ENCODE measurements at regions of chr11 and their contacts with region 1.

Region 1: GRCh38 chr11:7098235-7098832 is 9.5 kb downstream of the RBMXL2 start:
- DNase-seq: peak; percentile 49
- H3K4me3 ChIP-seq: no peak overlapping the region
- H3K27ac ChIP-seq: no peak overlapping the region
- H3K4me1 ChIP-seq: no peaks in the 10 kb centered on the region
- H3K27me3 ChIP-seq: peaks cover 12% of the 10 kb centered on the region
- CTCF ChIP-seq: peak; percentile 62

Region 2: GRCh38 chr11:7278314-7278917 is 180.1 kb after region 1 on chr11:
- CTCF ChIA-PET with region 1: no interaction called
- POLR2A ChIA-PET with region 1: no interaction called
- intact Hi-C with region 1: loop called (anchors 5 kb)
- DNase-seq: peak; percentile 31
- H3K4me3 ChIP-seq: no peak overlapping the region
- H3K27ac ChIP-seq: no peak overlapping the region
- H3K4me1 ChIP-seq: no peaks in the 10 kb centered on the region
- H3K27me3 ChIP-seq: no peaks in the 10 kb centered on the region
- CTCF ChIP-seq: peak; percentile 68

Region 3: GRCh38 chr11:7571640-7572000 is 473.3 kb after region 1 on chr11:
- CTCF ChIA-PET with region 1: no interaction called
- POLR2A ChIA-PET with region 1: no interaction called
- intact Hi-C with region 1: no loop called
- DNase-seq: peak; percentile 70
- H3K4me3 ChIP-seq: no peak overlapping the region
- H3K27ac ChIP-seq: no peak overlapping the region
- H3K4me1 ChIP-seq: peaks cover 17% of the 10 kb centered on the region
- H3K27me3 ChIP-seq: no peaks in the 10 kb centered on the region
- CTCF ChIP-seq: peak; percentile 80